Dendritic cell treated with granulocyte-macrophage colony-stimulating factor and Interleukin-4, amounts not matched to agents 40 ng/mL and 50 ng/mL, for 4 days (primary cell): ENCODE measurements at regions of chr7 and their contacts with region 1.

Region 1: DNA sequence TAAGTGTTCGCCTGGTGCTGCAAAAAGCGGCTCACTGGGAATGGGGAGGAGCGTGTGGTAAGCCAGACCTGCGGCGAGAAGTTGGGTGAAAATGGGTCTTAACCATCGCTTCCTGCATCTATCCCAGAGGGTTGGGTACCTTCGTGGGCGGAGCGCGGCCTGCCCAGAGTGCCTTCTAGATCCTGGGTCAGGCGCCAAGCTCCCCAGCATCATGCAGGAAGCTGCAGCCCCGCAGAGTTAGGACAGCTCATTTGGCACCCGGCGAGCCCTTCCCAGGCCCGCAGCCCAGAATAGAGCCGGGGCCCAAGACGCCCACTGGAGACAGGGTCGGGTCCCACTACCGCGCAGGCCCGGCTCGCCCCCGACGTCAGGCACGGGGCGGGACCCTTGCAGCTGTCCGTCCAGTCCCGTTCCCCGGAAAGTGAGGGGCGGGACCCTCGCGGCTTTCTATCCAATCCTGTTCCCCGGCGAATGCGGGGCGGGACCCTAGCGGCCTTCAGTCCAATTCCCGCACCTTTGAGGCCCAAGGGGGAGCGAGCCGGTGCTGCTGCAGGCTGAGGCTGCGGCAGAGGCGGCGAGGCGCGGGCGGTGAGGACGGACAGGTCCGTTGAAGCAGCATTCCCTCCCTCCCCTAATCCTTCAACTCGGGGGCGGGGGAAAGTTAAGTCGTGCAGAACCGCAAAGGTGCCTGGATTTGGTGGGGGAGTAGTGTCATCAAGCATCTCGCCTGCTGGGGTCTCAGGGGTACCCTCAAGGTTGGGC is at the start of gene CROT:
- H3K4me3 Mint-ChIP-seq: peak within 1 kb of the TSS; percentile 89
- H3K27ac Mint-ChIP-seq: peak within 1 kb of the TSS; percentile 92
- H3K4me1 Mint-ChIP-seq: peaks cover 13% of the 10 kb centered on the region
- H3K27me3 Mint-ChIP-seq: no peaks in the 10 kb centered on the region

Region 2: DNA sequence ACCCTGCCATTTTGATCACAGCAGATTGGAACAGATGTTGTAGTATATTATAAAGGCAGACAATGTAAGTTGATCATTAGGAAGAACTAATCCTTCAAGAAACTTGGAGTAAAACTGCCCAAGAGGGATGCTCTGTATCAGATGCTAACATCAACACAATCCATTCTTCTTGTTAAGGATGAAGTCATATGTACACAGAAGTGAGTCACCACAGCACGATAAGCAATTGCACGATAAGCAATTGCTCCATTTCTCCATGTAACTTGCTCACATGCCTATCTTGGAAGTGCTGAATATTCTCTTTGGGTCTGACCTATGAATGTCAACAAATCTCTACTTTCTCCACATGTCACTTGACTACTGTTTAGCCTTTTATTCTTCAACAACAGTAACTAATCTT is 234.6 kb before region 1 on chr7:
- intact Hi-C with region 1: no loop called
- H3K4me3 Mint-ChIP-seq: no peak overlapping the region
- H3K27ac Mint-ChIP-seq: no peak overlapping the region
- H3K4me1 Mint-ChIP-seq: no peaks in the 10 kb centered on the region
- H3K27me3 Mint-ChIP-seq: no peaks in the 10 kb centered on the region

Region 3: DNA sequence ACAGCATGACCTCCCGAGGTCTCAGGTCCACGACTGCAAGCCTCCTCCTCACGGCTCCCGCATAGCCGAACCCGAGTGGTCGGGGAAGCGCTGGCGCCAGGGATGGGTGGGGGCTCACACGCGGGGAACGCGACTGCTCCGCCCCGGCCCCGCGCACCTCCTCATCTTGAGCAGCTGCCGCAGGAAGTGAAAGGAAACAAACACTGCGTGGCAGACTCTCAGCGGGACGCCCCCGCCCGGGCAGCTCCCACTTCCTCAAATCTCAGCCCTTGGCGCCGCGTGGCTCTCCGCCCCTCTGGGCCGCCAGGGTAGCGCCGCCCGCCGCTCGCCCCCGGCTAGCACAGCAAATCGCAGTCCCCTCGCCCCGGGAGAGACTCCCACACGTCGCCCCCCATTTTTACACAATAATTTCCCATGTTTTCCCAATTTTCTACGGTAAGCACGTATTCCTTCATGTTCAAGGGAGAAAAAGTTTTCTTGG is 125.8 kb before region 1 on chr7 and contains the start of gene TMEM243:
- intact Hi-C with region 1: loop called (anchors 10 kb)
- H3K4me3 Mint-ChIP-seq: peak within 1 kb of the TSS; percentile 90
- H3K27ac Mint-ChIP-seq: peak within 1 kb of the TSS; percentile 94
- H3K4me1 Mint-ChIP-seq: peaks cover 30% of the 10 kb centered on the region
- H3K27me3 Mint-ChIP-seq: peaks cover 11% of the 10 kb centered on the region

Region 4: GRCh38 chr7:87391020-87391701 is 45.8 kb after region 1 on chr7:
- intact Hi-C with region 1: no loop called
- H3K4me3 Mint-ChIP-seq: no peak overlapping the region
- H3K27ac Mint-ChIP-seq: no peak overlapping the region
- H3K4me1 Mint-ChIP-seq: no peaks in the 10 kb centered on the region
- H3K27me3 Mint-ChIP-seq: no peaks in the 10 kb centered on the region

Region 5: GRCh38 chr7:87474533-87475358 is 129.4 kb after region 1 on chr7:
- intact Hi-C with region 1: loop called (anchors 10 kb)
- H3K4me3 Mint-ChIP-seq: peak overlapping the region; percentile 66
- H3K27ac Mint-ChIP-seq: peak overlapping the region; percentile 69
- H3K4me1 Mint-ChIP-seq: peaks cover 25% of the 10 kb centered on the region
- H3K27me3 Mint-ChIP-seq: peaks cover 15% of the 10 kb centered on the region

Region 6: DNA sequence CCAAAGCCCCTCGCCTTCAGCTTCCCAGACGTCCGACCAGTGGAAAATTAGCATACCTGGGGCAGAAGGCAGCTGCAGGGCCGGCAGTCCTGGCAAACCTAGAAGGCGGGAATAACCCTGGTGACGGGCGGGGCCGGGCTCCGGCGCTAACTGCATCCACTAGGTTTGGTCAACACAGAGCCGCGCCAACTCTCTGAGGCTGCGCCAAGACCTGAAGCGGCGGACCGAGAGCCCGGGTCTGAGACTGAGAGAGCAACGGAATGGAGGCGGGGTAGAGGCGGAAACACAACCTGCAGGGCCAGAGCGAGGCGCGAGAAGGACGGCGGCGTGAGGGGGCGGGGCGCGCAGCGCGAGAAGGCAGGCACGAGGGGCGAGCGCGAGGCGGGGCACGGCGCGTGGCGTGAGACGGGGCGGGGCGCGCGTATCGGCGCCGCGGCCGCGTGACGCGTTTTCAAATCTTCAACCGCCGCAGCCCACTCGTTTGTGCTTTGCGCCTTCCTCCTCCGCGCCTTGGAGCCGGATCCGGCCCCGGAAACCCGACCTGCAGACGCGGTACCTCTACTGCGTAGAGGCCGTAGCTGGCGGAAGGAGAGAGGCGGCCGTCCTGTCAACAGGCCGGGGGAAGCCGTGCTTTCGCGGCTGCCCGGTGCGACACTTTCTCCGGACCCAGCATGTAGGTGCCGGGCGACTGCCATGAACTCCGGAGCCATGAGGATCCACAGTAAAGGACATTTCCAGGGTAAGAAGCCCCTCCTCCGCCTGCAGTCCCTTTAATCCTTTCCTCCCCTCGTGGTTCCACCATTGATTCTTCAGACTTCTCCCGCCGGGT is 530.9 kb after region 1 on chr7 and contains the starts of genes DBF4 and SLC25A40:
- intact Hi-C with region 1: loop called (anchors 2 kb)
- H3K4me3 Mint-ChIP-seq: peak within 1 kb of the TSS; percentile 96
- H3K27ac Mint-ChIP-seq: peak within 1 kb of the TSS; percentile 100
- H3K4me1 Mint-ChIP-seq: peaks cover 41% of the 10 kb centered on the region
- H3K27me3 Mint-ChIP-seq: no peaks in the 10 kb centered on the region